Dendritic cell treated with granulocyte-macrophage colony-stimulating factor and Interleukin-4, amounts not matched to agents 40 ng/mL and 50 ng/mL, for 4 days (primary cell): ENCODE measurements at regions of chr12 and their contacts with region 1.

Region 1: GRCh38 chr12:64088431-64089349 is 133.4 kb downstream of the KICS2 start:
- H3K4me3 Mint-ChIP-seq: peak overlapping the region; percentile 23
- H3K27ac Mint-ChIP-seq: peak overlapping the region; percentile 89
- H3K4me1 Mint-ChIP-seq: peaks cover 53% of the 10 kb centered on the region
- H3K27me3 Mint-ChIP-seq: no peaks in the 10 kb centered on the region

Region 2: GRCh38 chr12:63917864-63918799 is 170.6 kb before region 1 on chr12:
- intact Hi-C with region 1: loop called (anchors 5 kb)
- H3K4me3 Mint-ChIP-seq: peak overlapping the region; percentile 35
- H3K27ac Mint-ChIP-seq: peak overlapping the region; percentile 85
- H3K4me1 Mint-ChIP-seq: peaks cover 46% of the 10 kb centered on the region
- H3K27me3 Mint-ChIP-seq: no peaks in the 10 kb centered on the region

Region 3: DNA sequence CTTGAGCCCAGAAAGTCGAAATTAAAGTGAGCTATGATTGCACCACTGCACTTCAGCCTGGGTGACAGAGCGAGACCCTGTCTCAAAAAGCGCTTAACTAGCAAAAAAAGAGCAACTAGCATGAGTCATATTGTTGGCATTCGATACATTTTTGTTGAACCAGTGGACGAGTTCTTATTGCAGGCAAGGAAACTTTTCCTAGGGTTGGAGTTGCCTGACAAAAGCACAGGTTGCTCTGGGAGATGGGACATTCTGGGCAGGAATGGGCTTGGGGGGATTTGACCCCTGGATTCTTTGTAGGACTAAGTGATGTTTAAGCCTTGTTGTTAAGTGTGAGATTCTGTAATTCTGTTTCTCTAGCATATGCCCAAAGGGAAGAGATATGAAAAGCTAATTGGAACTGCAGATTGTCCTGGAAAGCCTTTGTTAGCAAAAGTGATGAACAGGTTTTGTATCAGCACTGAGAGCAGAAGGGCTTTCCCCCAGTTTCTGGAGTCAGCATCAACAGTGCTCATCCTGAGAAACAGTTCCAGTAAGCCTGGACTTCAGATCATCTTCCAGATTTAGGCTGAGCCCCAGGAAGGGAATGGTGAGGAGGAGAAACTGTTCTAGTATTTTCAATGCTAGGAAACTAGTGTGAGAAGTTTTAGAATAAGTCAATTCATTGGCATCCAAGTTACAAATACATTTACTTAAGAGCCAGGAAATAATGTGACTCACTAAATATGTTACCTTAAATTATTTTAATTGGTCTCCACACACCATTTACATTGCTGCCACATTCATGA is 121.1 kb before region 1 on chr12:
- intact Hi-C with region 1: loop called (anchors 10 kb)
- H3K4me3 Mint-ChIP-seq: no peak overlapping the region
- H3K27ac Mint-ChIP-seq: peak overlapping the region; percentile 53
- H3K4me1 Mint-ChIP-seq: peaks cover 55% of the 10 kb centered on the region
- H3K27me3 Mint-ChIP-seq: no peaks in the 10 kb centered on the region

Region 4: GRCh38 chr12:64222009-64222765 is 133.5 kb after region 1 on chr12 and contains the start of gene KICS2:
- intact Hi-C with region 1: loop called (anchors 10 kb)
- H3K4me3 Mint-ChIP-seq: peak within 1 kb of the TSS; percentile 97
- H3K27ac Mint-ChIP-seq: peak within 1 kb of the TSS; percentile 89
- H3K4me1 Mint-ChIP-seq: peaks cover 28% of the 10 kb centered on the region
- H3K27me3 Mint-ChIP-seq: no peaks in the 10 kb centered on the region

Region 5: DNA sequence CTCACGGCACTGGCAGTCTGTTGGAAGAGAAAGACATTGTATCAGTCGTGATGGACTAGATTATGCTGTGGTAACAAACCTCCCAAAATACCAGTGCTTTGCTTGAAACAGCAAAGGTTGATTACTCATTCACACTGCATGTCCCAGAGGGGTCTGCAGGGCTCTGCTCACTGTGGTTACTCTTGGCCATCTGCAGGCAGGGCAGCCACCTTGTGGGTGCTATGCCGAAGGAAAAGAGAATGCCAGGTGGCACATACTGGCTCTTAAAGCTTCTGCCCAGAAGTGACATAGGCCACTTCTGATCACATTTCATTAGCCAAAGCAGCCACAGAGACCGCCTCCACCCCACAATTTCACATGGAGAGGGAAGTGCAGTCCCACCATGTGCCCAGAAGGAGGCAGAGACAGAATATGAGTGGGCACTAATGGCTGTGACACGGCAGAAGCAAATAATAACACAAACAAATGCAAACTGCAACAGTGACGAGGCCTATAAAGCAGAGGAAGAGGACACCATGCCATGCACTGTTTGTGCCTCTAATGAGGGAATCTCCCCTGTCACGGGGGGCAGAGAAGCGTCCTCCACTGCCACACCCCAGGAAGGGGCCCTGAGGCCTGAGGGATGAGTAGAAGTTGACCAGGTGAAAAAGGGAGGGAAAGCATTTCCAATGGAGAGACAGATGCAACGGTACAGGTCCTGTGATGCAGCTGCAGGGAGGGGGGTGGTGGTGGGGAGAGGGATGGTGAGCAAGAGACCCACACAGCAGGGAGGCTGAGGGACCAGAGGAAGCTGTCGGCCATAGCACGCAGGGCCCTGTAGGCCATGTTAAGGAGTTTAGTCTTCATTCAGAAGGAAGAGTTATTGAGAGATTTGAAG is 185.1 kb after region 1 on chr12:
- intact Hi-C with region 1: no loop called
- H3K4me3 Mint-ChIP-seq: no peak overlapping the region
- H3K27ac Mint-ChIP-seq: no peak overlapping the region
- H3K4me1 Mint-ChIP-seq: no peaks in the 10 kb centered on the region
- H3K27me3 Mint-ChIP-seq: peaks cover 1% of the 10 kb centered on the region